Activated naive CD4-positive, alpha-beta T cell treated with anti-CD3 and anti-CD28 coated beads for 36 hours (primary cell): ENCODE measurements at regions of chr3 and their contacts with region 1.

Region 1: GRCh38 chr3:183555541-183556081 is at the start of gene KLHL6:
- DNase-seq: peak; percentile 91
- H3K4me3 Mint-ChIP-seq: peak within 1 kb of the TSS; percentile 99
- H3K27ac Mint-ChIP-seq: peak within 1 kb of the TSS; percentile 100
- H3K4me1 Mint-ChIP-seq: peaks cover 40% of the 10 kb centered on the region
- H3K27me3 Mint-ChIP-seq: no peaks in the 10 kb centered on the region
- total RNA-seq, gene KLHL6: 82.3 to 82.4 TPM

Region 2: DNA sequence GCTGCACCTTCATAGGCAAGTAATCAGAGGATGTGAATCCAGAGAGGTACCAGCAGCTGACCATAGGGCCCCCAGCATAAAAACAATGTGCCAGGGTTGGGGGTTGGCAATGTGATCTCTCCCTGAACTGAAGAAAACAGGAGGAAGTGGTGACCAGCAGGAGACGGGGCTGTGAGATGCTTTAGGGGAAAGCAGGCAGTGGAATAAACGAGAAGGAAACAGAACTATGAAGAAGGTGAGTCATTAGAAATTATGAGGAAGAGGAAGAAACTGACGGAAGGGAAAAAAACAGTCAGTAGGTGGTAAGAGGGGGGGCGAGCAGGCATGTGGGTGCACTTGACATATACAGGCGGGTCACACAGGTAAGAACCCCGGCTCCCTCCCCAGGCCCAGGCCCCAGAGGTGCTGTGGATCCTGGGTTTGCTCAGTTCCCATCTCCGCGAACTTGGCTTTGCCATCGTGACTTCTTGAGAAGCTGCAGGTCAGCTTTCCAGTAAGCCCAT is 344.7 kb before region 1 on chr3:
- CTCF ChIA-PET with region 1: no interaction called
- intact Hi-C with region 1: loop called (anchors 2 kb)
- DNase-seq: peak; percentile 73
- H3K4me3 Mint-ChIP-seq: no peak overlapping the region
- H3K27ac Mint-ChIP-seq: peak overlapping the region; percentile 85
- H3K4me1 Mint-ChIP-seq: peaks cover 63% of the 10 kb centered on the region
- H3K27me3 Mint-ChIP-seq: no peaks in the 10 kb centered on the region

Region 3: DNA sequence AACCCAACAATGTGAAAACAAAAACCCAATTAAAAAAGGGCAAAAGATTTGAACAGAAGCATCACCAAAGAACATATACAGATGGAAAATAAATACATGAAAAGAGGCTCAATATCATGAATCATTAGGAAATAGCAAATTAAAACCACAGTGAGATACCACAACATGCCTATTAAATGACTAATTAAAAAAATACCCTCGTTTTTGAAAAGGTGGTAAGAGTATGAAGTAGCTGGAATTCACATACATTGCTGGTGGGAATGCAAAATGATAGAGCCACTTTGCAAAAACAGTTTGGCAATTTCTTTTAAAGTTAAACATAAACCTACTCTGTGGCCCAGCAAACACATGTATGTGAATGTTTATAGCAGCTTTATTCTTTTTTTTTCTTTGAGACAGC is 226.8 kb before region 1 on chr3:
- CTCF ChIA-PET with region 1: no interaction called
- intact Hi-C with region 1: no loop called
- DNase-seq: no peak
- H3K4me3 Mint-ChIP-seq: no peak overlapping the region
- H3K27ac Mint-ChIP-seq: no peak overlapping the region
- H3K4me1 Mint-ChIP-seq: peaks cover 24% of the 10 kb centered on the region
- H3K27me3 Mint-ChIP-seq: no peaks in the 10 kb centered on the region

Region 4: GRCh38 chr3:183427876-183428446 is 127.7 kb before region 1 on chr3:
- CTCF ChIA-PET with region 1: no interaction called
- intact Hi-C with region 1: loop called (anchors 1 kb)
- DNase-seq: peak; percentile 40
- H3K4me3 Mint-ChIP-seq: peak overlapping the region; percentile 79
- H3K27ac Mint-ChIP-seq: no peak overlapping the region
- H3K4me1 Mint-ChIP-seq: peaks cover 27% of the 10 kb centered on the region
- H3K27me3 Mint-ChIP-seq: peaks cover 14% of the 10 kb centered on the region

Region 5: DNA sequence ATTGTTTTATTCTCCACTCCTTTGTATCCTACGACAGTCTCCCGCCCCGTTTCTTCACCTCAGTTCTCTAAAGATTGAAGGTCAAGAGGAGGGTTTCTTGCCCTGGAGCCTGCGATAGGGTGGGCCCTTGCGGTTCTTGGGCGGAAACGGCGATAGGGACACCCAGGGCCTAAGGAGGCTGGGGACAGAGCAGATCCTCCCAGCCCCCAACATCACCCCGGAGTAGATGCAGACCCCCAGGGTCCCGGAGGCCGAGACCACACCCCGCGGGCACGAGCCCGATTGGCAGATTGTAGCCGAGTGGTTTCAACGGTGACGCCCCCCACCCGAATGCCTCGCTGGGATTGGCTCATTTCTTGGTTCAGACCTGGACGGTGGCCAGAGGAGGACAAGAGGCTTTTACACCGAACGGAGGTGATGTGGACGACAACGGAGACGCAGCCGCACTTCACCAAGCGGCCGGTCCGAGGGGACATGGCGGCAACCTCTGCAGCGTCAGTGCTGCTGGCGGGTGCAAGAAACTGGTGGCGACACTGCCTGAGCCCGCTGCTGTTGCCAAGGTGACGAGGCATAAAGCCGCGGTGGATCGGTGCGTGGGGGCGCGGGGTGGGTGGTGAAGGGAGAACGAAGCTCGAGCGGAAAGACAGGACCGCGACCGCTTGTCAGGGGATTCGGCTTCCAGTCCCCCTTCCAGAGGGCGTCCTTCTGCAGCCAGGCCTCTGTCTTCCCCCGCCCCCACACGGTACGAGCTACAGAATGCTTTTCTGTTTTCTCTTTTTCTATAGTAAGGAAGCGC is 108.2 kb before region 1 on chr3:
- CTCF ChIA-PET with region 1: no interaction called
- intact Hi-C with region 1: no loop called
- DNase-seq: peak; percentile 82
- H3K4me3 Mint-ChIP-seq: peak overlapping the region; percentile 91
- H3K27ac Mint-ChIP-seq: peak overlapping the region; percentile 46
- H3K4me1 Mint-ChIP-seq: peaks cover 10% of the 10 kb centered on the region
- H3K27me3 Mint-ChIP-seq: no peaks in the 10 kb centered on the region

Region 6: GRCh38 chr3:183515968-183516851 is 39.4 kb before region 1 on chr3:
- CTCF ChIA-PET with region 1: interaction called, 7 read pairs
- intact Hi-C with region 1: loop called (anchors 1 kb)
- DNase-seq: peak; percentile 80
- H3K4me3 Mint-ChIP-seq: peak overlapping the region; percentile 17
- H3K27ac Mint-ChIP-seq: peak overlapping the region; percentile 90
- H3K4me1 Mint-ChIP-seq: peaks cover 81% of the 10 kb centered on the region
- H3K27me3 Mint-ChIP-seq: no peaks in the 10 kb centered on the region

Region 7: GRCh38 chr3:183697610-183698317 is 142.2 kb after region 1 on chr3 and contains the start of gene YEATS2:
- CTCF ChIA-PET with region 1: no interaction called
- intact Hi-C with region 1: loop called (anchors 1 kb)
- DNase-seq: peak; percentile 79
- H3K4me3 Mint-ChIP-seq: peak within 1 kb of the TSS; percentile 80
- H3K27ac Mint-ChIP-seq: peak within 1 kb of the TSS; percentile 91
- H3K4me1 Mint-ChIP-seq: peaks cover 28% of the 10 kb centered on the region
- H3K27me3 Mint-ChIP-seq: no peaks in the 10 kb centered on the region
- total RNA-seq, gene YEATS2: 38.1 to 39.0 TPM

Region 8: GRCh38 chr3:184362668-184363540 is 807.3 kb after region 1 on chr3:
- CTCF ChIA-PET with region 1: no interaction called
- intact Hi-C with region 1: loop called (anchors 5 kb)
- DNase-seq: peak; percentile 97
- H3K4me3 Mint-ChIP-seq: peak overlapping the region; percentile 97
- H3K27ac Mint-ChIP-seq: peak overlapping the region; percentile 94
- H3K4me1 Mint-ChIP-seq: peaks cover 30% of the 10 kb centered on the region
- H3K27me3 Mint-ChIP-seq: no peaks in the 10 kb centered on the region

Region 9: GRCh38 chr3:184937611-184938010 is 1382.0 kb after region 1 on chr3:
- CTCF ChIA-PET with region 1: no interaction called
- intact Hi-C with region 1: no loop called
- DNase-seq: no peak
- H3K4me3 Mint-ChIP-seq: no peak overlapping the region
- H3K27ac Mint-ChIP-seq: no peak overlapping the region
- H3K4me1 Mint-ChIP-seq: no peaks in the 10 kb centered on the region
- H3K27me3 Mint-ChIP-seq: no peaks in the 10 kb centered on the region